ENCODE measurements at regions of chr6 and their contacts with region 1.

Region 1: DNA sequence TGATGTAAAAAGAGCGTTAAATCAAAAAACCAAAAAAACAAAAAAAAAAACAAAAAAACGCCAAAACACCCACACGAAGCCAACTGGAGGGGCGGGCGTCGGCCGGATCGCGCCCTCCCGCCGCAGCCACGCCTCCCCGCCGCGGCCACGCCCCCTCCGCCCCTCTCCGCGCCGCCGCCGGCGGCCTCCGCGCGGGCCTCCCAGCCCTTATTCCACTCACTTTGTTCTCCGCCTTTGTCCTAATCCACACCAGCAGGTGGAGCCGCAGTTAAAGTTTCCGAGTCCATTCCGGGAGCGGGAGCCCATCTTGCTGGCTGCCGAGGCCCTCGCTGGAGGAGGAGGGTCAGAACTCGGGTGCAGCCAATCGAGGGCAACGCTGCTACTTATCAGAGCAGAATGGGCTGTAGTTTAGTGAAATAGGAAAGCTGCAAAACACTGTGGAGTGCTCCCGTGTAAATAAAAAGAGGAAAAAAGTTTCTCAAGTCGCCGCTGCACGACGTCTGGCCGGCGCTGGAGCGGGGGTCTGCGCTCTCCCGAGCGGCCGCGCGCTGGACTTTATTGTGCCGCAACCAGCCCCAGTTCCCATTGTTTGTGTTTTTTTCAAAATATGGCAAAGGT is at the start of gene ASF1A:
- DNase-seq: peak; percentile 87
- ATAC-seq: peak; percentile 76
- H3K4me3 ChIP-seq: peak within 1 kb of the TSS; percentile 79
- H3K27ac ChIP-seq: peak within 1 kb of the TSS; percentile 90
- H3K4me1 ChIP-seq: peaks cover 11% of the 10 kb centered on the region
- H3K27me3 ChIP-seq: no peaks in the 10 kb centered on the region
- CTCF ChIP-seq: peak; percentile 52 to 83 (median 57)
- EP300 ChIP-seq: no peak
- POLR2A ChIP-seq: peak; percentile 70
- RAD21 ChIP-seq: peak; percentile 63; the same call in 1 of the 2 replicates
- polyA plus RNA-seq, gene ASF1A: 25.3 to 26.0 TPM

Region 2: GRCh38 chr6:118651282-118652050 is 242.4 kb before region 1 on chr6 and contains the start of gene CEP85L:
- CTCF ChIA-PET with region 1: no interaction called
- POLR2A ChIA-PET with region 1: no interaction called
- RAD21 ChIA-PET with region 1: no interaction called
- SMC1A ChIA-PET with region 1: no interaction called
- in situ Hi-C with region 1: no loop called
- intact Hi-C with region 1: loop called (anchors 10 kb)
- DNase-seq: peak; percentile 34
- ATAC-seq: peak; percentile 94
- H3K4me3 ChIP-seq: peak within 1 kb of the TSS; percentile 92
- H3K27ac ChIP-seq: peak within 1 kb of the TSS; percentile 71
- H3K4me1 ChIP-seq: peaks cover 5% of the 10 kb centered on the region
- H3K27me3 ChIP-seq: no peaks in the 10 kb centered on the region
- CTCF ChIP-seq: no peak
- EP300 ChIP-seq: no peak
- POLR2A ChIP-seq: peak; percentile 90
- RAD21 ChIP-seq: no peak
- polyA plus RNA-seq, gene CEP85L: 1.8 to 3.7 TPM

Region 3: GRCh38 chr6:118683881-118684872 is 209.7 kb before region 1 on chr6:
- CTCF ChIA-PET with region 1: no interaction called
- POLR2A ChIA-PET with region 1: no interaction called
- RAD21 ChIA-PET with region 1: no interaction called
- SMC1A ChIA-PET with region 1: no interaction called
- in situ Hi-C with region 1: no loop called
- intact Hi-C with region 1: no loop called
- DNase-seq: no peak
- ATAC-seq: no peak
- H3K4me3 ChIP-seq: no peak overlapping the region
- H3K27ac ChIP-seq: no peak overlapping the region
- H3K4me1 ChIP-seq: no peaks in the 10 kb centered on the region
- H3K27me3 ChIP-seq: no peaks in the 10 kb centered on the region
- CTCF ChIP-seq: no peak
- EP300 ChIP-seq: no peak
- POLR2A ChIP-seq: no peak
- RAD21 ChIP-seq: no peak

Region 4: GRCh38 chr6:118800394-118801071 is 93.4 kb before region 1 on chr6:
- CTCF ChIA-PET with region 1: interaction called, 19 read pairs
- POLR2A ChIA-PET with region 1: no interaction called
- RAD21 ChIA-PET with region 1: interaction called, 15 read pairs
- SMC1A ChIA-PET with region 1: interaction called, 11 read pairs
- in situ Hi-C with region 1: no loop called
- intact Hi-C with region 1: no loop called
- DNase-seq: peak; percentile 25
- ATAC-seq: peak; percentile 98
- H3K4me3 ChIP-seq: no peak overlapping the region
- H3K27ac ChIP-seq: no peak overlapping the region
- H3K4me1 ChIP-seq: no peaks in the 10 kb centered on the region
- H3K27me3 ChIP-seq: no peaks in the 10 kb centered on the region
- CTCF ChIP-seq: peak; percentile 81 to 96 (median 82)
- EP300 ChIP-seq: no peak
- POLR2A ChIP-seq: no peak
- RAD21 ChIP-seq: peak; percentile 80

Region 5: DNA sequence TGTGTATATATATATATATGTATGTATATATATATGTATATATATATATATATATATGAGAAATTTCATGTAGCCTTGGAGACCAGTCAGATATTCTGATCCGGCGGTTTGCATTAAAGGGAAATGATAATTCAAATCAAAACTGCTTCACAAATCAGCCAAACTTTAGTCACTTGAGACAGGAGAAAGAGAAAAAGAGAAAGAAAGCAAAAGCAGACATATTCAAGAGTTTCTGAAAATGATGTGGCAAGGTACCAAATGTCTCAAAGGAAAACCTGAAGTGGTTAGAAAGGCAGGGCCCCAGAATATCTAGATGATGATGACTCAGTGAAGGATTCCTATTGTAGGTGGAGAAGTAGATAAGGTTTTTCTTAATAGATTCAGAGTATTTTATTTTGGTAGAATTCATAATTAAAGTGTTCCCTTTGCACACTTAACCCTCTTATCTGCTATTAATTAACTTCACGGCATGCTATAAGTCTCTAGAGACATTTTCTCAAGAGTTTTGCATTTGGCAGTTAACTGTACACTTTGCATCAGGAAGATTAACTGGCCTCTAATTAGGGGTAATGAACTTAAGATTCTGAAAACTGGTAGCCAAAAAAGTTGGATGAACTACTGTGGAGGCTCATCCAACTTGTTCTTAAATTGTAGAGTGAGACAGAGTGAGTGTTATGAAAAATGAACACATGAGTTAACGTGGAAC is 50.1 kb before region 1 on chr6:
- CTCF ChIA-PET with region 1: interaction called, 5 read pairs
- POLR2A ChIA-PET with region 1: interaction called, 4 read pairs
- RAD21 ChIA-PET with region 1: interaction called, 10 read pairs
- SMC1A ChIA-PET with region 1: interaction called, 8 read pairs
- in situ Hi-C with region 1: no loop called
- intact Hi-C with region 1: loop called (anchors 2 kb)
- DNase-seq: peak; percentile 69
- ATAC-seq: peak; percentile 96
- H3K4me3 ChIP-seq: no peak overlapping the region; the same call in 1 of the 2 replicates
- H3K27ac ChIP-seq: peak overlapping the region; percentile 23
- H3K4me1 ChIP-seq: peaks cover 15% of the 10 kb centered on the region
- H3K27me3 ChIP-seq: no peaks in the 10 kb centered on the region
- CTCF ChIP-seq: no peak
- EP300 ChIP-seq: 0 out of 4 replicates have a peak, but pooled peaks have one; percentile 16 to 53
- POLR2A ChIP-seq: no peak
- RAD21 ChIP-seq: no peak

Region 6: DNA sequence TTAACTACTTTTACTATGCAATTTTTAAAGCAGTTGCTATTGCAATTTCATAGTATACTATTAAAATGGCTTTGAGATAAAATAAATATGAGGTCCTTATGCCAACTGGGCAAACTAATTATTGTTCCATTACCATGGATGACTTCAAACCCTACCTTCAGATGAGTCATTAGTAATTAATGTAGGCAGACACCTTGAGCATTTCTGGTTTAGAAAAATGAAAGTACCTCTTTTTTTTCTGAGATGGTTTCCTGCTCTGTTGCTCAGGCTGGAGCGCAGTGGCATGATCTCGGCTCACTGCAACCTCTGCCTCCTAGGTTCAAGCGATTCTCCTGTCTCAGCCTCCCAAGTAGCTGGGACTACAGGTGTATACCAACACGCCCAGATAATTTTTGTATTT is 11.9 kb after region 1 on chr6:
- CTCF ChIA-PET with region 1: interaction called, 15 read pairs
- POLR2A ChIA-PET with region 1: interaction called, 8 read pairs
- RAD21 ChIA-PET with region 1: interaction called, 3 read pairs
- SMC1A ChIA-PET with region 1: interaction called, 5 read pairs
- in situ Hi-C with region 1: no loop called
- intact Hi-C with region 1: no loop called
- DNase-seq: no peak
- ATAC-seq: no peak
- H3K4me3 ChIP-seq: no peak overlapping the region
- H3K27ac ChIP-seq: no peak overlapping the region
- H3K4me1 ChIP-seq: no peaks in the 10 kb centered on the region
- H3K27me3 ChIP-seq: no peaks in the 10 kb centered on the region
- CTCF ChIP-seq: no peak
- EP300 ChIP-seq: no peak
- POLR2A ChIP-seq: no peak
- RAD21 ChIP-seq: no peak

Region 7: GRCh38 chr6:118934461-118935330 is 40.8 kb after region 1 on chr6 and contains the start of gene MCM9:
- CTCF ChIA-PET with region 1: interaction called, 22 read pairs
- POLR2A ChIA-PET with region 1: interaction called, 14 read pairs
- RAD21 ChIA-PET with region 1: interaction called, 5 read pairs
- SMC1A ChIA-PET with region 1: interaction called, 15 read pairs
- in situ Hi-C with region 1: no loop called
- intact Hi-C with region 1: loop called (anchors 2 kb)
- DNase-seq: peak; percentile 67
- ATAC-seq: peak; percentile 97
- H3K4me3 ChIP-seq: peak within 1 kb of the TSS; percentile 99
- H3K27ac ChIP-seq: peak within 1 kb of the TSS; percentile 84
- H3K4me1 ChIP-seq: no peaks in the 10 kb centered on the region
- H3K27me3 ChIP-seq: no peaks in the 10 kb centered on the region
- CTCF ChIP-seq: no peak
- EP300 ChIP-seq: no peak
- POLR2A ChIP-seq: peak; percentile 79
- RAD21 ChIP-seq: no peak
- polyA plus RNA-seq, gene MCM9: 3.4 to 4.1 TPM

Region 8: DNA sequence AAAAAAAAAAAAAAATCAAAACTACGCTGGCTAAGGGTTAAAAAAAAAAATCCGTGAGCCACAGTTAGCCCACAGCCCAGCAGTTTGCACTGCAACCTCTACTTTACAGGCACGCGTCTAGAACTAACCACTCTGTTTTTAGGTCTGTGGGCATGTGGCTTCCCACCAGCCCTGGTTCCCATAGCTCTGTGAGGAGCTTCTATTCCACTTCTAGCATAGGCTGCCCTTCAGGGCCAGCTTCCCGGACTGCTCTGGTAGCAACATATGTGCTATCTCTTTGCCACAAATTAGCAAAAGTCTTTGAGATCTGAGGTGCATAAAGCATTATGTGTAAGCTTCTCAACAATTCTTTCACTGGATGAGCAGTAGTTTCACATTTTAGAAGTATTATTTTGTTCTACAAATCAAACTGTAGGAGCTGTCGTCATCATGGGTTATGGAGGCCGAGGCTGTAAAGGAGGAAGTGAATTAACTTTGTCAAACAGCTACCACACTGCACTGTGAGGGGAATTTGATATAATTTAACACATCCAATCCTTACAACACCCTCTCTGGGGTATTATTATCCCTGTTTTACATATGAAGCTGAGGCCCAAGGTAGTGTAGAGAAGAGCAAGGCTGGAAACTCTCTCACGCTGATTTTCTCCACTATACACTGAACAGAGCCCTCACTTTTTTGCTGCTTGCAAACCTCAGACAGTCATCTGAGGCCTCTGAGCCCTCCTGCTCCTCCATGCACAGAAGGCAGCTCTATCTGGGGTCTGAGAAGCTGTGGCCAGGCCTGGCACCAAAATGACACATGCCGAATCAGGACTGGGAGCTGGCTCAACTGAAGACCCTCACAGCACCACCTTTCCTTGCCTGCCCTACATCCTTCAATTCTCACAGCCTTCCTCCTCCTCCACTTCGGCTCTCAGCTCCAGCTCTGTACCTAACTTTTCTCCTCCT is 420.3 kb after region 1 on chr6:
- CTCF ChIA-PET with region 1: no interaction called
- POLR2A ChIA-PET with region 1: no interaction called
- RAD21 ChIA-PET with region 1: interaction called, 3 read pairs
- SMC1A ChIA-PET with region 1: no interaction called
- in situ Hi-C with region 1: no loop called
- intact Hi-C with region 1: loop called (anchors 10 kb)
- DNase-seq: peak; percentile 42
- ATAC-seq: peak; percentile 78
- H3K4me3 ChIP-seq: no peak overlapping the region; the same call in 1 of the 2 replicates
- H3K27ac ChIP-seq: peak overlapping the region; percentile 73
- H3K4me1 ChIP-seq: peaks cover 28% of the 10 kb centered on the region
- H3K27me3 ChIP-seq: no peaks in the 10 kb centered on the region
- CTCF ChIP-seq: no peak
- EP300 ChIP-seq: peak in 1 of 2 experiments; percentile 86; a peak in 1 of 4 replicates
- POLR2A ChIP-seq: peak; percentile 46; the same call in 1 of the 2 replicates
- RAD21 ChIP-seq: no peak

Measured in GM12878 (cell line).